Endothelial cell of umbilical vein (primary cell): ENCODE measurements at regions of chr1 and their contacts with region 1.

Region 1: GRCh38 chr1:156319664-156320063 is 18.4 kb downstream of the CCT3 start:
- DNase-seq: peak; percentile 60
- H3K4me3 ChIP-seq: no peak overlapping the region
- H3K27ac ChIP-seq: no peak overlapping the region
- H3K4me1 ChIP-seq: peaks cover 2% of the 10 kb centered on the region
- H3K27me3 ChIP-seq: no peaks in the 10 kb centered on the region
- CTCF ChIP-seq: peak; percentile 31 to 47
- POLR2A ChIP-seq: no peak

Region 2: GRCh38 chr1:156140879-156141252 is 178.8 kb before region 1 on chr1:
- CTCF ChIA-PET with region 1: interaction called, 17 read pairs
- POLR2A ChIA-PET with region 1: no interaction called
- dilution Hi-C with region 1: no loop called
- intact Hi-C with region 1: loop called (anchors 1 kb)
- DNase-seq: no peak
- H3K4me3 ChIP-seq: no peak overlapping the region
- H3K27ac ChIP-seq: no peak overlapping the region
- H3K4me1 ChIP-seq: no peaks in the 10 kb centered on the region
- H3K27me3 ChIP-seq: no peaks in the 10 kb centered on the region
- CTCF ChIP-seq: no peak
- POLR2A ChIP-seq: no peak

Region 3: GRCh38 chr1:156177919-156178654 is 141.6 kb before region 1 on chr1:
- CTCF ChIA-PET with region 1: no interaction called
- POLR2A ChIA-PET with region 1: no interaction called
- dilution Hi-C with region 1: no loop called
- intact Hi-C with region 1: no loop called
- DNase-seq: no peak
- H3K4me3 ChIP-seq: no peak overlapping the region
- H3K27ac ChIP-seq: no peak overlapping the region
- H3K4me1 ChIP-seq: no peaks in the 10 kb centered on the region
- H3K27me3 ChIP-seq: peaks cover 2 to 4% of the 10 kb centered on the region in 2 experiments
- CTCF ChIP-seq: no peak
- POLR2A ChIP-seq: no peak

Region 4: DNA sequence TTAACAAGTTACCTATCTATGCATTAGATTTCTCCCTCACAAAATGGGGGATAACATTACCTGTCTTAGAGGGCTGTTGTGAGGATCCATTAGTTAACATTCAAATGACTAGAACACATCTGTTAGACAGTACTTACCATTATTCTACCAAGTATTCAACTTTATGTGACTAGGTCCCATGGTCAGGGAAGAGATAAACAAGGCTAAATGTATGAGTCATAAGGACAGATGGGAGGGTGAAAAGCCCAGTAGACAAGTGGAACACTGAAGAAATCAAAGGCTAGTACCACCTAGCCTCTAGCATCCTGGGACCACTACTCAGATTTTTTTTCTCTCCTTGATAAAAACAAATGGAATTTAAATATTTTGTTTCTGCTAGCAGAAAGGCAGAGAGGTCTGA is 11.6 kb before region 1 on chr1:
- CTCF ChIA-PET with region 1: interaction called, 12 read pairs
- POLR2A ChIA-PET with region 1: no interaction called
- dilution Hi-C with region 1: no loop called
- intact Hi-C with region 1: loop called (anchors 1 kb)
- DNase-seq: peak; percentile 16
- H3K4me3 ChIP-seq: no peak overlapping the region
- H3K27ac ChIP-seq: no peak overlapping the region
- H3K4me1 ChIP-seq: no peaks in the 10 kb centered on the region
- H3K27me3 ChIP-seq: no peaks in the 10 kb centered on the region
- CTCF ChIP-seq: no peak
- POLR2A ChIP-seq: no peak

Region 5: GRCh38 chr1:156365754-156366153 is 46.1 kb after region 1 on chr1:
- CTCF ChIA-PET with region 1: no interaction called
- POLR2A ChIA-PET with region 1: no interaction called
- dilution Hi-C with region 1: no loop called
- intact Hi-C with region 1: no loop called
- DNase-seq: no peak
- H3K4me3 ChIP-seq: no peak overlapping the region
- H3K27ac ChIP-seq: no peak overlapping the region
- H3K4me1 ChIP-seq: peaks cover 6% of the 10 kb centered on the region
- H3K27me3 ChIP-seq: peaks cover 12 to 40% of the 10 kb centered on the region in 2 experiments
- CTCF ChIP-seq: no peak
- POLR2A ChIP-seq: no peak